ENCODE measurements at regions of chr1 and their contacts with region 1.

Region 1: GRCh38 chr1:155017041-155017945 is 14.7 kb downstream of the ZBTB7B start:
- DNase-seq: peak; percentile 59
- H3K4me3 ChIP-seq: peak overlapping the region; percentile 45
- H3K27ac ChIP-seq: peak overlapping the region; percentile 61
- H3K27me3 ChIP-seq: no peaks in the 10 kb centered on the region
- CTCF ChIP-seq: peak; percentile 96

Region 2: DNA sequence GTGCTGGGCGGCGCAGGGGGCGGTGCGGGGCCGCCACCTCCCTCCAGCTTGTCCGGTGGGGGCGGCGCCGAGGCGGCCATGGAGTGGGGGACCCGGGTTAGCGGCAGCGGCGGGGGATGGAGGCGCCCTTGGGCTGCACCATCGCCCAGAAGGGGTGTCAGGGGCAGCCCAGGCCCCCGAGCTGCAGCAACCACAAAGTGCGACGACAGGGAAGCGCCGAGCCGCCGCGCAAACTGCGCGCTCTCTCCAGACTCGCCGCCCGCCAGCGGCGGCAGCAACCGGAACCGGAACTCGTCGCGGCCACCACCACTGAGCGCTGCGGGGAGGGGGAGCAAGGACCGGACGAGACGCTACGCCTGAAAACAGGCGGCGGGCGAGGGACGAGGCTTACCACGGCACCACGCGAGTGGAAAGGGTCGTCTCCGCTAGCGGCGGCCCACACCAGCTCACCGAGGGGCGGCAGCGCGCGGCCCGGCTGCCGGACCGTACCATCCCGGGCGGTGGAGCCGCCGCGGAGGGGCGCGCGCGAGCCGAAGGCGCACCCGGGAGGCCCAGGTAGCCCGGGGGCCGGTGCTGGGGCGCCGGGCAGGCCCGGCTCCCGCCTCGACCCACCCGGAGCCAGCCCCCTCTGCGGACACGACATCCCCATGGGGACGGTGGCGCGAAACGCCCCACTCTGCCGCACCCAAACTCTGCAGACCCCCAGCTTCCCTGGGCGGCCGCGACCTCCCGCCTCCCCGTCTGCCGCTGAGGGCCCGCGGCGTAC is 55.6 kb before region 1 on chr1 and contains the start of gene PYGO2:
- CTCF ChIA-PET with region 1: interaction called, 11 read pairs
- POLR2A ChIA-PET with region 1: interaction called, 10 read pairs
- DNase-seq: no peak
- H3K4me3 ChIP-seq: peak within 1 kb of the TSS; percentile 74
- H3K27ac ChIP-seq: peak within 1 kb of the TSS; percentile 81
- H3K27me3 ChIP-seq: no peaks in the 10 kb centered on the region
- CTCF ChIP-seq: peak; percentile 16
- polyA plus RNA-seq, gene PYGO2: 18.1 and 19.3 TPM in 2 replicates

Region 3: GRCh38 chr1:155000726-155001424 is 16.4 kb before region 1 on chr1:
- CTCF ChIA-PET with region 1: interaction called, 38 read pairs
- POLR2A ChIA-PET with region 1: interaction called, 4 read pairs
- DNase-seq: peak; percentile 52
- H3K4me3 ChIP-seq: peak overlapping the region; percentile 76
- H3K27ac ChIP-seq: peak overlapping the region; percentile 84
- H3K27me3 ChIP-seq: no peaks in the 10 kb centered on the region
- CTCF ChIP-seq: no peak; the same call in none of the 2 replicates

Region 4: DNA sequence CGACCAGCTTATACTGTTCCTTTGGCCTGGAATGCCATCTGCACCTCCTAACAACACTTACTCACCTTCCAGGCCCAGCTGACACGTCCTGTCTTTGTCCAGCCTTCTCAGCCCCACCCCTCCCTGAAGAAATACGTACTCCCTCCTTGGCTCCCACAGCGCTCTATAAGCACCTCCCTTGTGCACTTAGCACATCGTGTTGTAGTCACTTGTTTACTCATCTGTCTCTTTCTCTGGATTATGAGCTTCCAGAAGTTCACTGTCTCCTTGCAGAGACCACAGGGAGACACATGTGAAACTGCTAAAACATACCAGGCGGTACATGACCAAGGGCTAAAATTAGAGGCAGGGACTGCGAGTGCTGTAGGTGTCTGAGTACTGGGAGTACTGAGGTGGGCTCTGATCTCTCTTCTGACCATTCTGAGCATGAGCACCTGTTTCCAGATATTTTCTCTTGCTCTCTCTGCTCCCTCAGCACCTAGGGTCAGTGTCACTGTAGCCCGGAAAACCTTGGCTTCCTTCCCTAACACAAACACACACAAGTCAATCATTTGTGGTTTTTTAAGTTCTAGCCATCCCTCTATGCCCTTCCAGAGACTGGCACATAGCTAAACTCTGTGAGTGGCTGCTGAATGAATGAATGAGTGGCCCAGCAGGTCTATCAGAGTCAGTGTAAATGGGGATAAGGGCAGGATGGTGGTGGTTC is 21.5 kb after region 1 on chr1:
- CTCF ChIA-PET with region 1: interaction called, 32 read pairs
- POLR2A ChIA-PET with region 1: no interaction called
- DNase-seq: no peak
- H3K4me3 ChIP-seq: no peak overlapping the region
- H3K27ac ChIP-seq: no peak overlapping the region
- H3K27me3 ChIP-seq: peaks cover 41% of the 10 kb centered on the region
- CTCF ChIP-seq: no peak

Region 5: DNA sequence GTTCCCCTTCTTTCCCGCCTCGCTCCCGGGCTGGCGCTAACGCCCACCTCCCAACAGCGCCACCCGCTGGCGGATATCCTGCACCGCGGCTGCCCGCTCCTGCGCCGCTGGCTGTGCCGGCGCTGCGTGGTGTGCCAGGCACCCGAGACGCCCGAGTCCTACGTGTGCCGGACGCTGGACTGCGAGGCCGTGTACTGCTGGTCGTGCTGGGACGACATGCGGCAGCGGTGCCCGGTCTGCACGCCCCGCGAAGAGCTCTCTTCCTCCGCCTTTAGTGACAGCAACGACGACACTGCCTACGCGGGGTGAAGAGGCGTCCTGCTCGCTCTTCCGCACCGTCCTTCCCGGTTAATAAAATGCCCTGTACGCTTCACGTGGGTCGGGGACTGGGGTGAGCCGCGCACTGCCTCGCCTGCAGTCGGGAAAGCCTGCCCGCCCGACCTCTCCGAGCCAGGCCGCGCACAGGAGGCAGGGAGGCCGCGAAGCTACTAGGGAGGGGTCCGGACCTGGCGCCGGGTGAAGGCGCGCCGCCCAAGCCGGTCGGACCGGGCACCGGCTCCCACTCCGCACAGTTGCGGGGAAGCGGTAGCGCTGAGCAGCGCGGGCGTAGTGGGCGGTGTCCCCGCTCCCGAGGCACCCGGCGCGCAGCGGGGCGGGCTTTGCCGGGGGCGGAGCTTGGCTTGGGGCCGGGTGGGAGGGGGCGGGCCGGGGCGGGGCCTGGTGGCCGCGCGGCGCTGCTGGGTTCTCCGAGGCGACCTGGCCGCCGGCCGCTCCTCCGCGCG is 33.5 kb after region 1 on chr1 and contains the start of gene ADAM15:
- CTCF ChIA-PET with region 1: interaction called, 11 read pairs
- POLR2A ChIA-PET with region 1: no interaction called
- DNase-seq: no peak
- H3K4me3 ChIP-seq: peak within 1 kb of the TSS; percentile 73
- H3K27ac ChIP-seq: peak within 1 kb of the TSS; percentile 31
- H3K27me3 ChIP-seq: no peaks in the 10 kb centered on the region
- CTCF ChIP-seq: peak; percentile 77
- polyA plus RNA-seq, gene ADAM15: 25.9 and 37.5 TPM in 2 replicates

Region 6: GRCh38 chr1:155379180-155379579 is 361.9 kb after region 1 on chr1:
- CTCF ChIA-PET with region 1: no interaction called
- POLR2A ChIA-PET with region 1: no interaction called
- DNase-seq: no peak
- H3K4me3 ChIP-seq: no peak overlapping the region
- H3K27ac ChIP-seq: no peak overlapping the region
- H3K27me3 ChIP-seq: no peaks in the 10 kb centered on the region
- CTCF ChIP-seq: no peak

Measured in AG04450 (cell line).